ENCODE measurements at regions of chr11 and their contacts with region 1.

Region 1: DNA sequence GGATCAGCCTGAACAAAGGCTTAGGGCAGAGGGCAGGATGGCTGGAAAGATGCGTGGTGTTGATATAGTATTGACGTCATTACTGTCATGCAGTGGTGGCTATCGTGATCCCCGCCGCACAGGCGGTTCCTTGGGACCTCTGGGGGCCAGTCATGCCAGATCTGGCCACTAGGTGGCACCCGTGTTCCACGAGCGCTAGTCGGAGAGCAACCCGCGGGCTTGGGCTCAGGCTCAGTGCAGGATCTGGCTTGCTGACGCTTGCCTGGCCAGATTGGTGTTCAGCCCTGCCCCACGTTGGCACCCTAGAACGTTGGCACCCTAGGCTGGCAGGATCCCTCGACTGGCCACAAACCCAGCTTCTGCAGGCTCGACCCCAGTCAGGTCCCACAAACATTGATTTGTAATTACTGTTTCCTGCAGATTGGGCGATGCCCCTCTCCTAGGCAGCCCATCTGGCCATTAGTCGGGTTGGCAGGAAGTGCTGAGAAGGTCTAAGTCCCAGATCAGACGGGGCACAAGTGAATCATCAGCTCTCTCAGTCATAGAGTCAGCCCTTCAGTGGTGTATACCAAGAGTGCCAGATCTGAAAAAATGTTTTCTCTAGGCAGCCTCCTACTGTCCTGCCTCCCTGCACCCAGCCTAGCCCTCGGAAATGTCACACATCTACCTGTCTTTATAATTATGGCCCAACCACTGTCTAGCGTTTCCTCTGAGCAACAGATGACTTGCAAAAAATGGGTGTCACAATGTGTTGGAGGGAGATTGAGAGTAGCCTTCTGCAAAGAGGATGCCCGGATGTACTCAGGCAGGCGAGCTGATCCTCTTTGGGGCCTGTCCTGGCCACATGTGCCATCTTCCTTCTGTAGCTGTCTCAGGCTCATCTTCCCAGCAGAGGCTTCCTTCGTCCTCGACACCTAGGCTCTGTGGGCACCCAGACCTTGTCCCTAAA is 315.3 kb downstream of the TMEM135 start:
- DNase-seq: peak; percentile 79
- H3K4me3 Mint-ChIP-seq: no peak overlapping the region
- H3K27ac Mint-ChIP-seq: no peak overlapping the region
- H3K4me1 Mint-ChIP-seq: peaks cover 6% of the 10 kb centered on the region
- H3K27me3 Mint-ChIP-seq: no peaks in the 10 kb centered on the region
- CTCF ChIP-seq: peak; percentile 98

Region 2: GRCh38 chr11:86938900-86939880 is 413.8 kb before region 1 on chr11:
- CTCF ChIA-PET with region 1: interaction called, 9 read pairs
- POLR2A ChIA-PET with region 1: no interaction called
- intact Hi-C with region 1: loop called (anchors 1 kb)
- DNase-seq: peak; percentile 60
- H3K4me3 Mint-ChIP-seq: no peak overlapping the region
- H3K27ac Mint-ChIP-seq: no peak overlapping the region
- H3K4me1 Mint-ChIP-seq: peaks cover 8% of the 10 kb centered on the region
- H3K27me3 Mint-ChIP-seq: no peaks in the 10 kb centered on the region
- CTCF ChIP-seq: peak; percentile 54

Region 3: GRCh38 chr11:87316491-87316890 is 36.5 kb before region 1 on chr11:
- CTCF ChIA-PET with region 1: no interaction called
- POLR2A ChIA-PET with region 1: no interaction called
- intact Hi-C with region 1: no loop called
- DNase-seq: no peak
- H3K4me3 Mint-ChIP-seq: no peak overlapping the region
- H3K27ac Mint-ChIP-seq: no peak overlapping the region
- H3K4me1 Mint-ChIP-seq: no peaks in the 10 kb centered on the region
- H3K27me3 Mint-ChIP-seq: no peaks in the 10 kb centered on the region
- CTCF ChIP-seq: no peak

Region 4: DNA sequence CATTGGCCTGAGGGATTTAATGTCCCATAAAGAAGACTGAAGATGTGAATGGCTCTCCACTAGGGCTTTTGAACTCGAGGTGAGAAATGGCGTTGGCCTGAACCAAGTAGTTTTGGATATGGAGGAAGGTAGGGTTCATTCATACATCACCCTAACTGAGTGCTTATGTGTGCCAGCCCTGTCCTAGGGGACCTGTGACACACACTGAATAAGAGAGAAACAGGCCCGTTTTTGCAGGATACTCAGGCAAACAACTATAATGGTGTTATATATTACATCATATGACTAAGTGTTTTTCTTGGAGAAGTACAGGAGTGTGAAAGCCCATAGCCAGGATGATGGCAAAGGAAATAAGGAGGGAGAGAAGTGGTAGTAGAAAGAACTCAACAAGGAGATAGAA is 52.8 kb after region 1 on chr11:
- CTCF ChIA-PET with region 1: interaction called, 20 read pairs
- POLR2A ChIA-PET with region 1: no interaction called
- intact Hi-C with region 1: no loop called
- DNase-seq: no peak
- H3K4me3 Mint-ChIP-seq: no peak overlapping the region
- H3K27ac Mint-ChIP-seq: no peak overlapping the region
- H3K4me1 Mint-ChIP-seq: peaks cover 6% of the 10 kb centered on the region
- H3K27me3 Mint-ChIP-seq: no peaks in the 10 kb centered on the region
- CTCF ChIP-seq: no peak

Region 5: DNA sequence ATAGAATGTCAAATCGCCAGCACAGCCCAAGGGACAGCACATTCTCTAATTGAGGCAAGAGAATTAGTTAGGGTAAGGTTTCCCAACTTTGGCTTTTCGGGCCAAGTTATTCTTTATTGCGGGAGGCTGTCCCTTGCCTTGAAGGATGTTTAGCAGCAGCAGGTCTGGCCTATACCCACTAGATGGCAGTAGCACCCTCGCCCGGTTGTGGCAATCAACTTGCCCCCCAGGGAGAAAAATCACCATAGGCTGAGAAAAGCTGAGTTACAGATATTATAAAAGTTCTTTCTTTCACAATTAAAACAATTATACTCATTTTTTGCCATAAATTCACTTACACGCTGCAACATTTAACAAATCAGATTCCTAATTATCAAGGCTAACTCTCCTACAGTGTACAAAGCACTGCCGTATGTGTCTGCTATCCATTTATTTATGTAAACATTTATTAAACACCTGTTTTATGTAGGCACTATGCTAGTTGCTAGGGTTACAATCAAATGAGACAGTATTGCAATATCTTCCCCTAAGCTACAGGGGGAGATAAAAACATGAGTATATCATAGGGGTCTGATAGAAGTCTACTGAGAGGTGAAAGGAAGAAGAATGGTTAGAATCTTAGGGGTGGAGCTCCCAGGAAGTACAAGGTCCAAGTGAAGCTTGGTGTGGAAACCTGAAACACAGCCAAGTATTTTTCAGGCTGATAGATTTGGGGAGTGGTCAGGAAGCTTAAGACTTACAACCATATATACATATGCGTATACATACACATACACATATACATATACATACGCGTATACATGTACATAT is 369.9 kb after region 1 on chr11:
- CTCF ChIA-PET with region 1: interaction called, 3 read pairs
- POLR2A ChIA-PET with region 1: no interaction called
- intact Hi-C with region 1: loop called (anchors 5 kb)
- DNase-seq: peak; percentile 43
- H3K4me3 Mint-ChIP-seq: no peak overlapping the region
- H3K27ac Mint-ChIP-seq: no peak overlapping the region
- H3K4me1 Mint-ChIP-seq: peaks cover 11% of the 10 kb centered on the region
- H3K27me3 Mint-ChIP-seq: peaks cover 12% of the 10 kb centered on the region
- CTCF ChIP-seq: peak; percentile 84

Region 6: DNA sequence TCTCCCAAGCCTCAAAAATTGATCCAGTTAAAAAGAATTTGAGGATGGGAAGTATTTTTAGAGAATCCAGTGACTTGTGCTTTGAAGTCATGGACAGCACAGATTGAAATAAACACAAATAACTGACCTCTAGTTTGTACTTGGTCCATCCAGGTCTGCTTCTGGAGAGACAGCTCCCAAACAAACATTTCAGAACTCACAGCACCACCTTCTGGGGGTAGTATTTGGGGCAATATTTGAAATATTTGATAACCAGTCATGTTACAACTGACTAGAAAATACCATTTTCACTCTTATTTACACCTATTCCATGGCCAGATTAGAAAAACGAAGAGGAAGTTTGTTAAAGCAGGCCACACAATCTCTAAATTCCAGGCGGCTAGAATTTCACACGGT is 928.3 kb after region 1 on chr11:
- CTCF ChIA-PET with region 1: no interaction called
- POLR2A ChIA-PET with region 1: no interaction called
- intact Hi-C with region 1: loop called (anchors 5 kb)
- DNase-seq: peak; percentile 33
- H3K4me3 Mint-ChIP-seq: no peak overlapping the region
- H3K27ac Mint-ChIP-seq: no peak overlapping the region
- H3K4me1 Mint-ChIP-seq: peaks cover 7% of the 10 kb centered on the region
- H3K27me3 Mint-ChIP-seq: no peaks in the 10 kb centered on the region
- CTCF ChIP-seq: peak; percentile 28

Measured in MCF 10A (cell line).